ENCODE measurements at regions of chr14 and their contacts with region 1.

Region 1: DNA sequence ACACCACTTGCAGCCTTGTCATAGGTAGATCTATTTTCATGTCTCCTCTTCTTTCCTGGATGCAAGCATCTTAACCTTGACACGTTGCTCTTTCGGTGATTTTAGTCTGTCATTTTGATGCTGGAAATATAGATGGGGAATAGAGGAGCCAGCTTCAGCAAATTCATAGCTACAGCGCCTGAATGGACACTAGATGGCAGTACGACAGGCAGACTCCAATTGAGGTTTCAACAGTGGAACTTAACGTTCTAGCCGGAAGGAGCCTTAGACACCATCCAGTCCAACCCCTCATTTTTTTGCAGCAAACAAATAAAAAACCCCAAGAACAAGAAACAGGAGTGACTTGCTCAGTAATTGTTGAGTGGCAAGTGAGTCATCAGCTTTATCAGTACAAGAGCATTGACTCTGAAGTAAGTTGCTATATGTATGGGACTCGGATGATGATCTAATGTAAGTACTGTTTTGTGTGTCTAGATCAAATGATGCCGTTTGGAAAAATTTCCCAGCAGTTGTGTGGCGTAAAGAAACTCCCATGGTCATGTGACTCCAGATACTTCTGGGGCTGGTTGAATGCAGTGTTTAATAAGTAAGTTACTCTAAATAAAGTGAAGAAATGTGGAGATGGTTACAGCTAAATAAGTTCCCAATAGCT is 9.0 kb downstream of the DMAC2L start:
- DNase-seq: peak in 8 of 9 donors; percentile 52 to 83 (median 76)
- ATAC-seq: peak; percentile 99
- H3K4me3 ChIP-seq: peak overlapping the region; percentile 15
- H3K4me3 Mint-ChIP-seq: no peak overlapping the region
- H3K27ac ChIP-seq: peak overlapping the region; percentile 11
- H3K27ac Mint-ChIP-seq: no peak overlapping the region
- H3K4me1 ChIP-seq: peaks cover 0 to 4% of the 10 kb centered on the region in 2 donors
- H3K4me1 Mint-ChIP-seq: peaks cover 8 to 34% (median 27%) of the 10 kb centered on the region in 7 donors
- H3K27me3 ChIP-seq: no peaks in the 10 kb centered on the region
- H3K27me3 Mint-ChIP-seq: no peaks in the 10 kb centered on the region

Region 2: GRCh38 chr14:49862089-49862673 is 459.0 kb before region 1 on chr14:
- CTCF ChIA-PET with region 1: no interaction called
- POLR2A ChIA-PET with region 1: no interaction called
- intact Hi-C with region 1: no loop called
- DNase-seq: peak; percentile 78 to 94 (median 89)
- ATAC-seq: peak; percentile 73
- H3K4me3 ChIP-seq: peak overlapping the region; percentile 94
- H3K4me3 Mint-ChIP-seq: no peak overlapping the region
- H3K27ac ChIP-seq: peak overlapping the region; percentile 95
- H3K27ac Mint-ChIP-seq: no peak overlapping the region
- H3K4me1 ChIP-seq: peaks cover 19 to 25% of the 10 kb centered on the region in 2 donors
- H3K4me1 Mint-ChIP-seq: peaks cover 0 to 33% (median 7%) of the 10 kb centered on the region in 7 donors
- H3K27me3 ChIP-seq: no peaks in the 10 kb centered on the region
- H3K27me3 Mint-ChIP-seq: peaks cover 0 to 9% (median 0%) of the 10 kb centered on the region in 5 donors

Region 3: DNA sequence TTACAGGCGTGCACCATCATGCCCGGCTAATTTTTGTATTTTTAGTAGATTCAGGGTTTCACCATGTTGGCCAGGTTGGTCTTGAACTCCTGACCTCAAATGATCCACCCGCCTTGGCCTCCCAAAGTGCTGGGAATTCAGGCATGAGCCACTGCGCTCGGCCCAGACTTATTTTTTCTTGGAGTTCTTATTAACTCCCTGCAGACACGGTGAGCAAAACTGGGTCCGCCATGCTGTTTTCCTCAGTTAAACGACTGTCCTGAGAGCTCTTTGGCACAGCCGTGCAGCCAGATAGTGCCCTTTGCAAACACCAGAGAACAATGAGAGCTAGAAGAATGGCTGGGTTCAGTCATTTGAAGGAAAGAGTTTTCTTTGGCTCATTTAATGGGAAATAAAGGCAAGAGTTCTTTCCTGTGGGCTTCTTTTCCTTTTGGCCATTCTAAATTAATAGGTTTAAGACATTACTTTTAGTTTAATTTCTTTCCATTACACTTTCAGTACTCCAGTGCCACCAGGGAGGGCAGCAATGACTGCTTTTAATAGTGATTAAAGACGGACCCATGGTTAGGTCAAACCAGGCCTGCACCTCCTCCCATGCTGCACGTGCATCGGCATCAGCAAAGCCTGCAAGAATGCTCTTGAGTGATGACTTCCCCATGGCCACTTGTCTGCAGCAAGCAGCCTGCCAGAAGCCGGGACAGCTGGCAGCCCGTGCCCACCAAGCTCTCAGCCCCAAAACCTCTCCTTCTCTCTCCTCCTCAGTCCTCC is 265.5 kb before region 1 on chr14:
- CTCF ChIA-PET with region 1: no interaction called
- POLR2A ChIA-PET with region 1: no interaction called
- intact Hi-C with region 1: no loop called
- DNase-seq: no peak
- ATAC-seq: peak; percentile 83
- H3K4me3 ChIP-seq: no peak overlapping the region
- H3K4me3 Mint-ChIP-seq: no peak overlapping the region
- H3K27ac ChIP-seq: no peak overlapping the region
- H3K27ac Mint-ChIP-seq: peak overlapping the region in 3 of 9 donors; percentile 15 to 52 (median 47)
- H3K4me1 ChIP-seq: peaks cover 8 to 15% of the 10 kb centered on the region in 2 donors
- H3K4me1 Mint-ChIP-seq: peaks cover 23 to 53% (median 46%) of the 10 kb centered on the region in 7 donors
- H3K27me3 ChIP-seq: no peaks in the 10 kb centered on the region
- H3K27me3 Mint-ChIP-seq: no peaks in the 10 kb centered on the region

Region 4: DNA sequence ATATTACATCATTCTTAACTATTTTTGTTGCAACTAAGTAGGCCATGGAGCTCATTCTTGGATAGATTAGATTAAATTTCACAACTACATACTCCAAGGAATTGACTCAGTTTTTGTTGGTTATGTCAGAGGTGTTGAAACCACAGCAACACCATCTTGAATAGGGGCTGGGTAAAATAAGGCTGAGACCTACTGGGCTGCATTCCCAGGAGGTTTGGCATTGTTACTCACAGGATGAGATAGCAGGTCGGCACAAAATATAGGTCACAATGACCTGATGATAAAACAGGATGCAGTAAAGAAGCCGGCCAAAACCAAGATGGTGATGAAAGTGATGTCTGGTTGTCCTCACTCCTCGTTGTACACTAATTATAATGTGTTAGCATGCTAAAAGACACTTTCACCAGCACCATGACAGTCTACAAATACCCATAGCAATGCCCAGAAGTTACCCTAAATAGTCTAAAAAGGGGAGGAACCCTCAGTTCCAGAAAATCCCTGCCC is 11.9 kb after region 1 on chr14:
- CTCF ChIA-PET with region 1: interaction called, 7 read pairs
- POLR2A ChIA-PET with region 1: interaction called, 4 read pairs
- intact Hi-C with region 1: loop called in 1 of 2 experiments (anchors 1 kb)
- DNase-seq: no peak
- ATAC-seq: no peak
- H3K4me3 ChIP-seq: no peak overlapping the region
- H3K4me3 Mint-ChIP-seq: no peak overlapping the region
- H3K27ac ChIP-seq: no peak overlapping the region
- H3K27ac Mint-ChIP-seq: peak overlapping the region in 2 of 9 donors; percentile 41 to 46
- H3K4me1 ChIP-seq: peaks cover 0 to 11% of the 10 kb centered on the region in 2 donors
- H3K4me1 Mint-ChIP-seq: peaks cover 10 to 19% (median 14%) of the 10 kb centered on the region in 7 donors
- H3K27me3 ChIP-seq: no peaks in the 10 kb centered on the region
- H3K27me3 Mint-ChIP-seq: no peaks in the 10 kb centered on the region

Region 5: DNA sequence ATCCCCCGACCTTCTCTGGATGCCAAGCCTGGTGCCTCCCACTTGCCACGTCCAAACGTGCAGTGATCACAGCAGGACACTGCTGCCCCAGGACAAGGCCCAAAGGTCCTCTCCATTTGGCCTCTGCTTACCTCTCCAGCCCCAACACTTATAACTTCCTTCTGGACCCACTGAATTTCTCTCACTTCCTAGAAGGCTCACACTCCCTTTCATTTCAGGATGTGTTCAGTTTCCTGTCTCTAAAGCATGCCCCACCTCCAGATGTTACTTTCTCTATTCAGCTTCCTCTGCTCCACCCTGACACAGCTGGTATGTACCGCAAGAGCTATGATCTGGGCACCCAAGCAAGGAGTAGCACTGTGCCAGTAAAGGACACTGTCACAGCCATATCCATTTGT is 42.6 kb after region 1 on chr14:
- CTCF ChIA-PET with region 1: interaction called, 3 read pairs
- POLR2A ChIA-PET with region 1: interaction called, 3 read pairs
- intact Hi-C with region 1: loop called (anchors 1 to 2 kb)
- DNase-seq: peak in 8 of 9 donors; percentile 36 to 68 (median 57)
- ATAC-seq: peak; percentile 94
- H3K4me3 ChIP-seq: peak overlapping the region; percentile 67
- H3K4me3 Mint-ChIP-seq: peak overlapping the region; percentile 80 to 94 (median 90)
- H3K27ac ChIP-seq: peak overlapping the region; percentile 72
- H3K27ac Mint-ChIP-seq: peak overlapping the region; percentile 90 to 95 (median 93)
- H3K4me1 ChIP-seq: peaks cover 10 to 12% of the 10 kb centered on the region in 2 donors
- H3K4me1 Mint-ChIP-seq: peaks cover 23 to 58% (median 43%) of the 10 kb centered on the region in 7 donors
- H3K27me3 ChIP-seq: no peaks in the 10 kb centered on the region
- H3K27me3 Mint-ChIP-seq: no peaks in the 10 kb centered on the region

Region 6: GRCh38 chr14:50425816-50426215 is 104.7 kb after region 1 on chr14:
- CTCF ChIA-PET with region 1: no interaction called
- POLR2A ChIA-PET with region 1: no interaction called
- intact Hi-C with region 1: loop called in 1 of 2 experiments (anchors 5 kb)
- DNase-seq: no peak
- ATAC-seq: no peak
- H3K4me3 ChIP-seq: no peak overlapping the region
- H3K4me3 Mint-ChIP-seq: no peak overlapping the region
- H3K27ac ChIP-seq: no peak overlapping the region
- H3K27ac Mint-ChIP-seq: no peak overlapping the region
- H3K4me1 ChIP-seq: no peaks in the 10 kb centered on the region
- H3K4me1 Mint-ChIP-seq: no peaks in the 10 kb centered on the region
- H3K27me3 ChIP-seq: no peaks in the 10 kb centered on the region
- H3K27me3 Mint-ChIP-seq: no peaks in the 10 kb centered on the region

Region 7: DNA sequence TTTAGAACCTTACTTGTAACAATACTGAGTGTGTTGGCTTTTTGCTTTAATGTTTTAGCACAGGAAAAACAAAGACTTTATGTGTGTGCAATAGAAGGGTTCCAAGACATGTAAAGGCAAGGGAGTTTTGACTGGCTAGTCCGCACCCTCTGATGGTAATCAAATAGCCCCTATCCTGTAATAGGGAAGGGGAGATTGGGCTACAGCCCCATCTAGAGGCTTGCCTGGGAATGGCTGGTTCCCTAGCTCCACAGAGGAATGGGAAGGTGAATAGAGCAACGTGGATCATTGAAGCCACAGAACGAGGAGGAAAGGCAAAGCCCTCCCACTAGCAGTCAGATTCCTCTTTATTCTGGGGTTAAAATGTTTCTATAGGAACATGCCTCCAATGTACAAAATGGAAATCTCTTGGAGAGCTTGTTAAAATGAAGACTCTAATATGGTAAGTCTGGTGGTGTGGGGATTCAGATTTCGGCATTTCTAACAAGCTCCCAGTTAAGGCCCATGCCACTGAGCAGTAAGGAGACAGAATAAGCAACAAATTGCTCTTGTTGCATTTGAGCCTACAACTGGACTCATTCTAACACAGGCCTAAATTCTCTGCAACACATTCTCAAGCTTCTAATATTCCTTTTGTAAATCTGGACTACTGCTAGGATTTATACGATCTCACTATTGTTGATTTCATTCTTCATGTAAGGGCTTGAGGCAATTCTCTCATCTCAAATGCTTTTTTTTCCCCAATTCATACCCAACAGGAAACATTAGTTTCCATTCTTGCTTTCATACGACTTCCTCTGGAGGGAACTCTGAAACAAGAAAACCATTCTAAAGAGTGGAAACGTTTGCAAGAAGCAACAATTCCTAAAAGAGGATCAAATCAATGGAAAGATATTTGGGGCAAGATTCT is 452.8 kb after region 1 on chr14:
- CTCF ChIA-PET with region 1: interaction called, 6 read pairs
- POLR2A ChIA-PET with region 1: no interaction called
- intact Hi-C with region 1: loop called in 1 of 2 experiments (anchors 2 kb)
- DNase-seq: peak in 1 of 9 donors; percentile 38
- ATAC-seq: peak; percentile 65
- H3K4me3 ChIP-seq: no peak overlapping the region
- H3K4me3 Mint-ChIP-seq: peak overlapping the region in 3 of 10 donors; percentile 1 to 27 (median 18)
- H3K27ac ChIP-seq: no peak overlapping the region
- H3K27ac Mint-ChIP-seq: peak overlapping the region in 8 of 9 donors; percentile 1 to 78 (median 37)
- H3K4me1 ChIP-seq: peaks cover 9 to 13% of the 10 kb centered on the region in 2 donors
- H3K4me1 Mint-ChIP-seq: peaks cover 17 to 41% (median 28%) of the 10 kb centered on the region in 7 donors
- H3K27me3 ChIP-seq: no peaks in the 10 kb centered on the region
- H3K27me3 Mint-ChIP-seq: no peaks in the 10 kb centered on the region

Measured in naive thymus-derived CD4-positive, alpha-beta T cell (primary cell).